Body of pancreas (tissue), 4 donors: ENCODE measurements at regions of chr4 and their contacts with region 1.

Region 1: GRCh38 chr4:147707865-147708672 is 23.8 kb upstream of the ARHGAP10 start:
- DNase-seq: peak; percentile 63 to 76 (median 69)
- ATAC-seq: peak; percentile 70
- H3K4me3 ChIP-seq: no peak overlapping the region
- H3K27ac ChIP-seq: no peak overlapping the region
- H3K4me1 ChIP-seq: peaks cover 3% of the 10 kb centered on the region
- H3K27me3 ChIP-seq: no peaks in the 10 kb centered on the region
- CTCF ChIP-seq: peak; percentile 68 to 95 (median 90)
- POLR2A ChIP-seq: no peak

Region 2: GRCh38 chr4:147326591-147326990 is 381.5 kb before region 1 on chr4:
- intact Hi-C with region 1: no loop called
- DNase-seq: no peak
- ATAC-seq: no peak
- H3K4me3 ChIP-seq: no peak overlapping the region
- H3K27ac ChIP-seq: no peak overlapping the region
- H3K4me1 ChIP-seq: no peaks in the 10 kb centered on the region
- H3K27me3 ChIP-seq: no peaks in the 10 kb centered on the region
- CTCF ChIP-seq: no peak
- POLR2A ChIP-seq: no peak

Region 3: GRCh38 chr4:147633113-147633512 is 75.0 kb before region 1 on chr4:
- intact Hi-C with region 1: no loop called
- DNase-seq: no peak
- ATAC-seq: no peak
- H3K4me3 ChIP-seq: no peak overlapping the region
- H3K27ac ChIP-seq: no peak overlapping the region
- H3K4me1 ChIP-seq: no peaks in the 10 kb centered on the region
- H3K27me3 ChIP-seq: no peaks in the 10 kb centered on the region
- CTCF ChIP-seq: no peak
- POLR2A ChIP-seq: no peak

Region 4: GRCh38 chr4:147863111-147863747 is 155.2 kb after region 1 on chr4:
- intact Hi-C with region 1: loop called (anchors 5 kb)
- DNase-seq: no peak
- ATAC-seq: no peak
- H3K4me3 ChIP-seq: no peak overlapping the region
- H3K27ac ChIP-seq: no peak overlapping the region
- H3K4me1 ChIP-seq: peaks cover 15% of the 10 kb centered on the region
- H3K27me3 ChIP-seq: no peaks in the 10 kb centered on the region
- CTCF ChIP-seq: no peak
- POLR2A ChIP-seq: no peak